Heart left ventricle (tissue), 16 donors: ENCODE measurements at regions of chr3 and their contacts with region 1.

Region 1: GRCh38 chr3:103127737-103128136 is 692.9 kb downstream of the ZPLD1 start:
- DNase-seq: no peak
- ATAC-seq: no peak
- H3K4me3 ChIP-seq: no peak overlapping the region
- H3K27ac ChIP-seq: no peak overlapping the region
- H3K4me1 ChIP-seq: no peaks in the 10 kb centered on the region
- H3K27me3 ChIP-seq: no peaks in the 10 kb centered on the region
- CTCF ChIP-seq: no peak
- POLR2A ChIP-seq: no peak

Region 2: GRCh38 chr3:103112273-103112672 is 15.5 kb before region 1 on chr3:
- intact Hi-C with region 1: loop called in 1 of 10 experiments (anchors 2 kb)
- DNase-seq: no peak
- ATAC-seq: no peak
- H3K4me3 ChIP-seq: no peak overlapping the region
- H3K27ac ChIP-seq: no peak overlapping the region
- H3K4me1 ChIP-seq: no peaks in the 10 kb centered on the region
- H3K27me3 ChIP-seq: no peaks in the 10 kb centered on the region
- CTCF ChIP-seq: no peak
- POLR2A ChIP-seq: no peak

Region 3: DNA sequence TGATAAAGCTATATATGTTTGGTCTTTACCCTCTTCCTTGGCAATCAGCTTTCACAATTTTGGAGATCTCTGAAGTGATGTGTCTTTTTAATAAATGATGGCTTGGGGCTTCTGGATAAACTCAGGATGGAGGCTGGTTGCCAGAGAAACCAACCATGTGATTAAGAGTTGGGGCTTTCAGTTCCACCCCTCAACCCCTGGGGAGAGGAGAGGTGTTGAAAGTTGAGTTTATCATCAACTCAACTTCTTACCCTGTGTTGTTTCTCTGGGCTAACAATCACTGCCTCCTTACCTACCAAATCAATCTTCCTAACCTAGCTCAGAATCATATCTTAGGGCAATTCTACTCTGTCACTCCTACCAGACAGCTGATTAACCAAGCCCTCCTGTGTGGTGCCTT is 42.9 kb after region 1 on chr3:
- intact Hi-C with region 1: no loop called
- DNase-seq: no peak
- ATAC-seq: no peak
- H3K4me3 ChIP-seq: no peak overlapping the region
- H3K27ac ChIP-seq: no peak overlapping the region
- H3K4me1 ChIP-seq: no peaks in the 10 kb centered on the region
- H3K27me3 ChIP-seq: no peaks in the 10 kb centered on the region
- CTCF ChIP-seq: no peak
- POLR2A ChIP-seq: no peak